Right cardiac atrium (tissue), 5 donors: ENCODE measurements at regions of chr3 and their contacts with region 1.

Region 1: DNA sequence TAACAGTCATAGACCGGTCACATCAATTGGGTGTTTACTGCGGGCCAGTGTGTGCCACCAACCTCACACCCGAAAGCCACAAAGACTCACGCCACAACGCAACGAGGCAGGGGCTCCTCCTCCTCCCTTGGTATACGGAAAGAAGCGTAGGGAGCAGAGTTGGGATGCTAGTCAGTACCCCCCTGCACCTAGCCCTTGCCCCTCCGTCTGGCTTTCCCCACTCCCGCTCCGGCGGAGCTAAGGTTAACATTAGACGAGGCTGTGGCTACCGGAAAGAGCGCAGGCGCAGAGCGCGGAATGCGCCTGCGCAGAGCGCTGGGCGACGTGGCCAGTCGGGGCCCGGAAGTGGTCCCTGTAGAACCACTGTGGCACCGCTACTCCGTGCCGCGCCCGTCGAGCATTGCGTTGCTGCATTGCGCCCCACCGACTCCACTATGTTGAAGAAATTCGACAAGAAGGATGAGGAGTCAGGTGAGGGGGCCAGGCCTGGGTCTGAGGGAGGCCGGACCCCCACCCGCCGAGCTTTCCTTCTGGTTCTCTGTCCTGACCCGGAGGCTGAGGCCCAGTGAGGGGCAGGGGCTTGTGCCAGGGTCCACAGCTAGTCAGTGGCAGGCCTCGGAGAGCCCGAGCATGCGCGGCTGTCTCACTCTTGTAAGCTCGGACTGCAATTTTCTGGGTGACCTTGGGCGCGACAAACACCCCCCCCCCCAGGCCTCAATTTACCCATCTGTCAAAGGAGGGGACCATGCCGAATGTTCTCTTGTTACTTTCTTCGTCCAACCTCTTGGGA is at the start of gene COPG1:
- DNase-seq: peak; percentile 89 to 96 (median 96)
- ATAC-seq: peak; percentile 96
- H3K4me3 ChIP-seq: peak within 1 kb of the TSS; percentile 94
- H3K27ac ChIP-seq: peak within 1 kb of the TSS; percentile 78
- H3K4me1 ChIP-seq: peaks cover 3% of the 10 kb centered on the region
- H3K27me3 ChIP-seq: no peaks in the 10 kb centered on the region
- total RNA-seq, gene COPG1: 76.3 to 133 (median 108) TPM

Region 2: GRCh38 chr3:128969993-128970739 is 279.3 kb before region 1 on chr3:
- intact Hi-C with region 1: loop called (anchors 2 to 10 kb)
- DNase-seq: peak in 2 of 3 donors; percentile 67 to 70
- ATAC-seq: peak in 1 of 2 donors; percentile 41
- H3K4me3 ChIP-seq: no peak overlapping the region
- H3K27ac ChIP-seq: no peak overlapping the region
- H3K4me1 ChIP-seq: no peaks in the 10 kb centered on the region
- H3K27me3 ChIP-seq: no peaks in the 10 kb centered on the region

Region 3: GRCh38 chr3:129052675-129053074 is 196.8 kb before region 1 on chr3:
- intact Hi-C with region 1: loop called in 2 of 4 experiments (anchors 5 to 10 kb)
- DNase-seq: peak; percentile 68 to 88 (median 87)
- ATAC-seq: peak; percentile 81 to 85
- H3K4me3 ChIP-seq: no peak overlapping the region
- H3K27ac ChIP-seq: peak overlapping the region; percentile 90
- H3K4me1 ChIP-seq: peaks cover 3% of the 10 kb centered on the region
- H3K27me3 ChIP-seq: no peaks in the 10 kb centered on the region

Region 4: GRCh38 chr3:129058441-129059200 is 190.8 kb before region 1 on chr3:
- intact Hi-C with region 1: loop called in 2 of 4 experiments (anchors 5 to 10 kb)
- DNase-seq: no peak
- ATAC-seq: no peak
- H3K4me3 ChIP-seq: no peak overlapping the region
- H3K27ac ChIP-seq: no peak overlapping the region
- H3K4me1 ChIP-seq: no peaks in the 10 kb centered on the region
- H3K27me3 ChIP-seq: no peaks in the 10 kb centered on the region

Region 5: DNA sequence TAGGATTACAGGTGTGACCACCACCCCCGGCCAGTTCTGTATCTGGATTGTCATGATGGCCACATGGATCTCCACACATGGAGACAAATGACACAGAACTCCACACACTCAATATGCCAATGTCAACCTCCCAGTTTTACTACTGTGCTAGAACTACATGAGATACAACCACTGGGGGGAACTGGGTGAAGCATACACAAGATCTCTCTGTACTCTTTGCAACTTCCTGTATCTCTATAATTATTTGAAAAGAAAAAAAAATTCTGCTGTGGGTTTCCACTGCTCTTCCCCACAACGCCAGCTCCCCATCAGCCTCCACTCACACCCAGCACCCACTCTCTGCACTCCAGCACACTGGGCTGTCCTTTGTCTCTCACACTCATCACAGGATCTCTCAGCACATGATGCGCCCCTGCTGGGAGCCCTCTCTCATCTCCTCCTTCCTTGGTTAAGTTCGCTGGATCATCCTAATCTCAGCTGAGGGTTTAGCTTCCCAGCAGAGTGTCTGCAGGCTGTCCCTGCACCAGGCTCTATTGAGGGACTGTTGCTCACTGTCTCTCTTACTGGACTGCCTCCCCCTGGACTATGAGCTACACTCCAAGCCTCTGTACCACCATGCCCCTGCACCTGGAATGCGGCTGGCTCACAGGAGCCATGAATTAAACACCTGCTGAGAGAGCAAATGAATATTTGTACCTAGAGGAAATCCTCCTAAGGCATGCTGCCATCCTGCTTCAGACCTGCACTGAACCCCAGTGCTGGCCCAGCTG is 117.2 kb before region 1 on chr3:
- intact Hi-C with region 1: no loop called
- DNase-seq: peak in 1 of 3 donors; percentile 63
- ATAC-seq: peak; percentile 51 to 85
- H3K4me3 ChIP-seq: no peak overlapping the region
- H3K27ac ChIP-seq: peak overlapping the region; percentile 33
- H3K4me1 ChIP-seq: no peaks in the 10 kb centered on the region
- H3K27me3 ChIP-seq: no peaks in the 10 kb centered on the region

Region 6: GRCh38 chr3:129144786-129145185 is 104.7 kb before region 1 on chr3:
- intact Hi-C with region 1: no loop called
- DNase-seq: no peak
- ATAC-seq: no peak
- H3K4me3 ChIP-seq: no peak overlapping the region
- H3K27ac ChIP-seq: no peak overlapping the region
- H3K4me1 ChIP-seq: no peaks in the 10 kb centered on the region
- H3K27me3 ChIP-seq: no peaks in the 10 kb centered on the region

Region 7: GRCh38 chr3:129160891-129161859 is 88.3 kb before region 1 on chr3 and contains the start of gene ISY1:
- intact Hi-C with region 1: loop called in 2 of 4 experiments (anchors 5 to 10 kb)
- DNase-seq: peak; percentile 92 to 95 (median 94)
- ATAC-seq: peak; percentile 93 to 95
- H3K4me3 ChIP-seq: peak within 1 kb of the TSS; percentile 99
- H3K27ac ChIP-seq: peak within 1 kb of the TSS; percentile 97
- H3K4me1 ChIP-seq: peaks cover 5% of the 10 kb centered on the region
- H3K27me3 ChIP-seq: no peaks in the 10 kb centered on the region
- total RNA-seq, gene ISY1: 22.7 to 30.6 (median 27.3) TPM

Region 8: GRCh38 chr3:129173206-129173605 is 76.3 kb before region 1 on chr3:
- intact Hi-C with region 1: loop called in 2 of 4 experiments (anchors 5 kb)
- DNase-seq: no peak
- ATAC-seq: no peak
- H3K4me3 ChIP-seq: no peak overlapping the region
- H3K27ac ChIP-seq: no peak overlapping the region
- H3K4me1 ChIP-seq: peaks cover 7% of the 10 kb centered on the region
- H3K27me3 ChIP-seq: no peaks in the 10 kb centered on the region

Region 9: GRCh38 chr3:129183569-129184395 is 65.7 kb before region 1 on chr3 and contains the start of gene CNBP:
- intact Hi-C with region 1: loop called in 1 of 4 experiments (anchors 5 kb)
- DNase-seq: peak; percentile 95 to 98 (median 97)
- ATAC-seq: peak; percentile 99
- H3K4me3 ChIP-seq: peak within 1 kb of the TSS; percentile 80
- H3K27ac ChIP-seq: peak within 1 kb of the TSS; percentile 96
- H3K4me1 ChIP-seq: peaks cover 2% of the 10 kb centered on the region
- H3K27me3 ChIP-seq: no peaks in the 10 kb centered on the region
- total RNA-seq, gene CNBP: 368 to 537 (median 429) TPM

Region 10: GRCh38 chr3:129469026-129469425 is 219.6 kb after region 1 on chr3:
- intact Hi-C with region 1: no loop called
- DNase-seq: no peak
- ATAC-seq: peak; percentile 86 to 93
- H3K4me3 ChIP-seq: no peak overlapping the region
- H3K27ac ChIP-seq: peak overlapping the region; percentile 84
- H3K4me1 ChIP-seq: peaks cover 8% of the 10 kb centered on the region
- H3K27me3 ChIP-seq: no peaks in the 10 kb centered on the region